Transverse colon (tissue), 4 donors: ENCODE measurements at regions of chr13 and their contacts with region 1.

Region 1: GRCh38 chr13:59846843-59847620 is 316.7 kb downstream of the DIAPH3 start:
- DNase-seq: no peak
- H3K4me3 ChIP-seq: no peak overlapping the region
- H3K27ac ChIP-seq: no peak overlapping the region
- H3K4me1 ChIP-seq: peaks cover 0 to 9% (median 0%) of the 10 kb centered on the region in 4 donors
- H3K27me3 ChIP-seq: no peaks in the 10 kb centered on the region
- CTCF ChIP-seq: no peak
- EP300 ChIP-seq: no peak
- POLR2A ChIP-seq: no peak

Region 2: DNA sequence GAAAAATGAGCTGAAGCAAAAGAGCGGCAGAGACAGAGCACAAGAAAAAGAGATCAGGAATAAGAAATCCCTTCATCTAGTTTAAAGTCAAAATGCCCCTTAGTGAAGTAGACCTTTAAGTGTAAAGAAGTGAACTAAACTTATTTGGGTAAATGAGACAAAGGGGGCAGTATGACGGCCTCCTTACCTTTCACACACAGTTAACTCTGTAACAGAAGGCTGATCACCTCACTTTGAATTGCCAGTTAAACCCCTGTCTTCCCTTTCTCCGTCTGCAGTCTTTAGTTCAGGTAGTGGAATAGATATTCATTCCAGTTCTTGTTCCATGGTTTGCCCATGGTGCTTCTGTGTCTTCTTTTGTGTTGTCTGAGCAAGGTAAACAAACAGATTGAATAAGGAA is 713.1 kb before region 1 on chr13:
- in situ Hi-C with region 1: no loop called
- intact Hi-C with region 1: loop called (anchors 10 kb)
- DNase-seq: no peak
- H3K4me3 ChIP-seq: no peak overlapping the region
- H3K27ac ChIP-seq: no peak overlapping the region
- H3K4me1 ChIP-seq: no peaks in the 10 kb centered on the region
- H3K27me3 ChIP-seq: no peaks in the 10 kb centered on the region
- CTCF ChIP-seq: no peak
- EP300 ChIP-seq: no peak
- POLR2A ChIP-seq: no peak

Region 3: GRCh38 chr13:59931612-59932011 is 84.6 kb after region 1 on chr13:
- in situ Hi-C with region 1: no loop called
- intact Hi-C with region 1: no loop called
- DNase-seq: no peak
- H3K4me3 ChIP-seq: no peak overlapping the region
- H3K27ac ChIP-seq: no peak overlapping the region
- H3K4me1 ChIP-seq: no peaks in the 10 kb centered on the region
- H3K27me3 ChIP-seq: no peaks in the 10 kb centered on the region
- CTCF ChIP-seq: no peak
- EP300 ChIP-seq: no peak
- POLR2A ChIP-seq: no peak